ENCODE measurements at regions of chr1 and their contacts with region 1.

Region 1: DNA sequence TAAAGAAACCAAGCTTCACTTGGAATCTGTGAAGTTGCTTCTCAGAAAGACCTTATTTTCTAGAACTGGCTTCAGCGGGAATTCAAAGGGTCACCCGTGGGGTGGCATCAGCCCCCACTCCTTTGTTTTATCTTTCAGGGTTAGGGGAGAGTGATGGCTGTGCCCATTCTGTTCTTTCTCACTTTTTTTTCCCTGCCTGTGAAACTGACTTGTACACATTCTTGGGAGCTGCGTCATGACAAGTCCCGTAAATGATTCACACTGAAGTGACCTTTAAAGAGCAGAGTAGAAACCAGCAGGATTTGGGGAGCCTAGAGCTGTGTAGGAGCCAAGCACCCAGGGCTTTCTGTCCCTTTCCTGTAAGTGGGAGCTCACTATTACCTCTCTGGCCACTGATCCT is 43.8 kb downstream of the SLC44A3 start:
- DNase-seq: no peak
- ATAC-seq: peak; percentile 92 to 97
- H3K4me3 ChIP-seq: no peak overlapping the region
- H3K27ac ChIP-seq: peak overlapping the region; percentile 80
- H3K4me1 ChIP-seq: peaks cover 39% of the 10 kb centered on the region
- H3K27me3 ChIP-seq: no peaks in the 10 kb centered on the region
- CTCF ChIP-seq: no peak

Region 2: DNA sequence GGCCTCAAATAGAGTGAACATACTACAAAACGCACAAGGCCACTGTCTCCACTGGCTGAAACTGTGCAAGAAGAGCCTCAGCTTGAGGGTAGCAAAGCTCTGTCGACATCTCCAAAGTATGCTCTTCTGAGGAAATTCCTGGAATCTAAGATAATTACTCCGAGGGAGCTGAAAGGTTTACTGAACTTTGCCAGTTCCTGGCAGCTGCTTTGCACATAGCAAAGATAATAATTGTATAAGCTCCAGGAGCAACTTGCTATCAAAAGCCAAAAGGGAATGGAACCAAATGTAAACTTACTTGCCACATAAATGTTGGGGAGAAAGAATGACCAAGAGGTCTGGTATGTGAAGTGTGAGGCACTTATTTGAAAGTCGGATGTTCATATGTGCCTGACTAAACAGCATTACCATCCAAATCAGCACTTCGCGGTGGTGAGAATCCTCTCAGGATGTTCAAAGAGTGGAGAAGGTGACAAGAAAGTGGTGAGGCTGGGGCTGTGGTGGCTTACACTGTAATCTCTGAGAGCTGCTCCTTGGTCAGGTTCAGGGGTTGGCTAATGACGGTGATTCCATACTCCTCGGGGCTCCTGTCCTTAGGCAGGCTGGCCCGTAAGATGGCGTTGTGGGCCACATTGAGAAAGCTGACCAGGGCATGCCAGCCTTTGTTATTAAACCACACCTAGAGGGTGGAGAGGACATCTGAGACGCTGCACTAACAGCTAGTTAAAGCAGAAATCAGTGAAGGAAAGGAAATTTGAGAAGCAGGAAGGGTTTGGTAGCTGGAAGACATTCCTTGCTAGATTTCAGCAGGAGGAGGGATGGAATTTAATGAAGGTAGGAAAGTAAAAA is 843.0 kb before region 1 on chr1:
- intact Hi-C with region 1: no loop called
- DNase-seq: no peak
- ATAC-seq: peak; percentile 62 to 77
- H3K4me3 ChIP-seq: no peak overlapping the region
- H3K27ac ChIP-seq: peak overlapping the region; percentile 60
- H3K4me1 ChIP-seq: peaks cover 21% of the 10 kb centered on the region
- H3K27me3 ChIP-seq: no peaks in the 10 kb centered on the region
- CTCF ChIP-seq: no peak

Region 3: GRCh38 chr1:94926915-94927404 is 63.0 kb after region 1 on chr1 and contains the start of gene CNN3:
- intact Hi-C with region 1: loop called (anchors 10 kb)
- DNase-seq: peak; percentile 94
- ATAC-seq: peak; percentile 94 to 96
- H3K4me3 ChIP-seq: peak within 1 kb of the TSS; percentile 69
- H3K27ac ChIP-seq: peak within 1 kb of the TSS; percentile 96
- H3K4me1 ChIP-seq: peaks cover 68% of the 10 kb centered on the region
- H3K27me3 ChIP-seq: peaks cover 10% of the 10 kb centered on the region
- CTCF ChIP-seq: no peak
- total RNA-seq, gene CNN3: 151 TPM

Measured in lower lobe of right lung (tissue), 2 donors.